ENCODE measurements at regions of chr6 and their contacts with region 1.

Region 1: GRCh38 chr6:164731539-164731938 is 577.9 kb downstream of the C6orf118 start:
- DNase-seq: no peak
- H3K4me3 ChIP-seq: no peak overlapping the region
- H3K27ac ChIP-seq: no peak overlapping the region
- H3K4me1 ChIP-seq: no peaks in the 10 kb centered on the region
- H3K27me3 ChIP-seq: no peaks in the 10 kb centered on the region
- CTCF ChIP-seq: no peak

Region 2: GRCh38 chr6:164693944-164694343 is 37.6 kb before region 1 on chr6:
- CTCF ChIA-PET with region 1: no interaction called
- dilution Hi-C with region 1: loop called (anchors 5 kb)
- in situ Hi-C with region 1: no loop called
- intact Hi-C with region 1: no loop called
- DNase-seq: no peak
- H3K4me3 ChIP-seq: no peak overlapping the region
- H3K27ac ChIP-seq: no peak overlapping the region
- H3K4me1 ChIP-seq: no peaks in the 10 kb centered on the region
- H3K27me3 ChIP-seq: no peaks in the 10 kb centered on the region
- CTCF ChIP-seq: no peak

Region 3: GRCh38 chr6:164812706-164813105 is 81.2 kb after region 1 on chr6:
- CTCF ChIA-PET with region 1: no interaction called
- dilution Hi-C with region 1: no loop called
- in situ Hi-C with region 1: no loop called
- intact Hi-C with region 1: no loop called
- DNase-seq: no peak
- H3K4me3 ChIP-seq: no peak overlapping the region
- H3K27ac ChIP-seq: no peak overlapping the region
- H3K4me1 ChIP-seq: no peaks in the 10 kb centered on the region
- H3K27me3 ChIP-seq: no peaks in the 10 kb centered on the region
- CTCF ChIP-seq: no peak

Region 4: GRCh38 chr6:164838068-164838615 is 106.6 kb after region 1 on chr6:
- CTCF ChIA-PET with region 1: no interaction called
- dilution Hi-C with region 1: no loop called
- in situ Hi-C with region 1: no loop called
- intact Hi-C with region 1: no loop called
- DNase-seq: no peak
- H3K4me3 ChIP-seq: no peak overlapping the region
- H3K27ac ChIP-seq: no peak overlapping the region
- H3K4me1 ChIP-seq: no peaks in the 10 kb centered on the region
- H3K27me3 ChIP-seq: no peaks in the 10 kb centered on the region
- CTCF ChIP-seq: no peak

Region 5: GRCh38 chr6:165129086-165129485 is 397.5 kb after region 1 on chr6:
- CTCF ChIA-PET with region 1: no interaction called
- dilution Hi-C with region 1: no loop called
- in situ Hi-C with region 1: no loop called
- intact Hi-C with region 1: no loop called
- DNase-seq: no peak
- H3K4me3 ChIP-seq: no peak overlapping the region
- H3K27ac ChIP-seq: no peak overlapping the region
- H3K4me1 ChIP-seq: no peaks in the 10 kb centered on the region
- H3K27me3 ChIP-seq: no peaks in the 10 kb centered on the region
- CTCF ChIP-seq: no peak

Measured in mammary epithelial cell (primary cell).